ENCODE measurements at regions of chr7 and their contacts with region 1.

Region 1: GRCh38 chr7:47932016-47932415 is 16.2 kb downstream of the PKD1L1 start:
- DNase-seq: peak; percentile 76
- ATAC-seq: peak; percentile 77
- H3K4me3 ChIP-seq: no peak overlapping the region
- H3K27ac ChIP-seq: no peak overlapping the region
- H3K4me1 ChIP-seq: peaks cover 2% of the 10 kb centered on the region; the same call in 1 of the 2 replicates
- H3K27me3 ChIP-seq: peaks cover 6% of the 10 kb centered on the region; the same call in 1 of the 2 replicates
- CTCF ChIP-seq: no peak
- POLR2A ChIP-seq: no peak
- RAD21 ChIP-seq: no peak

Region 2: DNA sequence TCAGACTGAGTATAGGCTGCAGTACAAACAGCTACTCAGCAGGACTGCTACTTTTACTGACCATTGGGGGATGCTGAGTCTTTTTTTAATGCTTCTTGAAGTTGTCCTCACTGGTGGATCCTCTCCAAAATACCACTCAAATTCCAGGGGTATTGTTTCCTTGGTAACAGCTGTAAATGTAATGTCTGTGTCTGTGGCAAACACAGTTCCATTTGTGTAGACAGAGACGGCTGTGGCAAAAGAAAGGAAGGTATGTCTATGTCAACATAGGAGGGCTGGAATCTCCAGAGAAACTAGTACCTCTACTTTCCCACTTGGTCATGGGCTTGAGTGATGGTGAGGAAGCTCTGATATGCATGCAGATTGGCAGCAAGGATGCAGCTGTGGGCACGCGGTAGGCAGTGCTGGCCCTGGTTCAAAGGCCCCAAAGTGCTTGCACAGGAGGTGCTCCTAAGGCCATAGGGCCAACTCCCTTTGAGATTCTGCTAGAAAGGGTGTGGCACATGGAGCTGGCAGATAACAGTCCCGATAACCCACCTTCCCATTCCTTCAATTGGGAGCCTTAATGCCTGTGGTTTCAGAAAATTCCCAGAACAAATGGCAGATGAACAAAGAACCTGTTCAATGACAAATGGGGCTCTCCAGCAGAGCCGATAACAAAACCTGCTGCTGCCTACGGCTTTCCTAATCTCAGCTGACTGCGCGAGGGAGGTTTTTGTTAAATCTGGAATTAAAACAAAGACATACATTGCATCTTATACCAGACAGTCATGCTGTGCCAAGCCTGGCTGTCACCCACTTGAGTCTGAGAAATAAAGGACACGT is 26.7 kb before region 1 on chr7:
- CTCF ChIA-PET with region 1: interaction called, 10 read pairs
- POLR2A ChIA-PET with region 1: no interaction called
- dilution Hi-C with region 1: no loop called
- in situ Hi-C with region 1: no loop called
- intact Hi-C with region 1: no loop called
- DNase-seq: no peak
- ATAC-seq: no peak
- H3K4me3 ChIP-seq: no peak overlapping the region
- H3K27ac ChIP-seq: no peak overlapping the region
- H3K4me1 ChIP-seq: no peaks in the 10 kb centered on the region
- H3K27me3 ChIP-seq: peaks cover 32% of the 10 kb centered on the region
- CTCF ChIP-seq: no peak
- POLR2A ChIP-seq: no peak
- RAD21 ChIP-seq: no peak

Measured in IMR-90 (cell line).